ENCODE measurements at regions of chr11 and their contacts with region 1.

Region 1: DNA sequence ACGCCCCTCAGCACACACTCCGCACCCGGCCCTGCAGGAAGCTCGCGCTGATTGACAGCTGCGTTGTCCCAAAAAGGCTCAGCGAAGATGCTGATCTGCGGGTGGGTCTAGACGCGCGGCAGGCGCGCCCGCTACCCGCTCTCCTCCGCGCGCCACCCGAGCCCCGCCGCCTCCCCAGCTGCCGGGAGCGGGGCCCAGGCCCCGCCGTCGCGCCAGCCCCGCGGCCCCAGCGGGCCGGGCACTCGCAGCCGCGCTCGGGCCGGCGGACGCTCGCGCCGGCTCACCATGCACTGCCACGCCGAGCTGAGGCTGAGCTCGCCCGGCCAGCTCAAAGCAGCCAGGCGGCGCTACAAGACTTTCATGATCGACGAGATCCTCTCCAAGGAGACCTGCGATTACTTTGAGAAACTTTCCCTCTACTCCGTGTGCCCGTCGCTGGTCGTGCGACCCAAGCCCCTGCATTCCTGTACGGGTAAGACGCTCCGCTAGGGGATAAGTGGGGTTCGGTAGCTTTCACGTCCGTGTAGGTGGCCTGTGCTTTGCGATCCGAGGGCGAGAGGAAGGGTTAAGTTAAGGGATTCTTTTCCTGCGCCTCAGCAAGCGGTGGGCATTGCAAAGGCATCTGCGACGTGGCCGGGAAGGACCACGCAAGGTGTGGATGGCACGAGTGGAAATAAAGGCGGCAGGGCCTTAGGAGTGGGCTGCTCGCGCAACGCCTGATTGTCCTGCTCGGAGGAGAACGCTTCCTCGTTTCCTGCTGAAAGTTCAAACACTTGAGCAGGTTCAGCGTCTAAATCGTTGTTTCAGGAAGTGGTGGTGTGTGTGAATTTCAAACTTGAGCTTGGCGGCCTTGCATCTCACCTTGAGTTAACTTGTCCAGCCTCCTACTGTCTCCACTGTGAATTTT is at the start of gene BARX2:
- DNase-seq: peak; percentile 72
- H3K4me3 Mint-ChIP-seq: peak within 1 kb of the TSS; percentile 65
- H3K27ac Mint-ChIP-seq: no peak within 1 kb of the TSS
- H3K4me1 Mint-ChIP-seq: peaks cover 6% of the 10 kb centered on the region
- H3K27me3 Mint-ChIP-seq: peaks cover 96% of the 10 kb centered on the region
- CTCF ChIP-seq: peak; percentile 63
- total RNA-seq, gene BARX2: not detected in 2 replicates

Region 2: DNA sequence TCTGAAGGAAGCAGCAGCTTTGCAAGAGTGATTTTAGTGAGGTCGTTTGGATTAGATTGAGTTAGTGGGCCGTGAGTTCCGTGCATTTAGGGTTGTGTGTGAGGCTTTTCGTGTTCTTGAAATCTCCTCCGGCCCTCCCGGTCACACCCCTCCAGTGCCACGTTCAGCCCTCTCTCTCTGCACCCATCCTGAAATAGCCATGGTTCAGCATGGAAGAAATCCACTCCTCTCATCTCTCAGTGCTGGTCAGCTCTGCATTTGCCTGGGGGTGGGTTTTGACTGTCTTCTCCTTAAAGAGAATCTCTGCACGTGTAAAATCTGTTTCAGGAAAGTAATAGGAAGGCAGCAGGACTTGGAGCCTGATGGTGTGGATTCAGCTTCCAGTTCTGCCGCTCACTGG is 19.4 kb after region 1 on chr11:
- CTCF ChIA-PET with region 1: interaction called, 11 read pairs
- POLR2A ChIA-PET with region 1: no interaction called
- intact Hi-C with region 1: no loop called
- DNase-seq: no peak
- H3K4me3 Mint-ChIP-seq: no peak overlapping the region
- H3K27ac Mint-ChIP-seq: no peak overlapping the region
- H3K4me1 Mint-ChIP-seq: no peaks in the 10 kb centered on the region
- H3K27me3 Mint-ChIP-seq: peaks cover 5% of the 10 kb centered on the region
- CTCF ChIP-seq: no peak

Region 3: DNA sequence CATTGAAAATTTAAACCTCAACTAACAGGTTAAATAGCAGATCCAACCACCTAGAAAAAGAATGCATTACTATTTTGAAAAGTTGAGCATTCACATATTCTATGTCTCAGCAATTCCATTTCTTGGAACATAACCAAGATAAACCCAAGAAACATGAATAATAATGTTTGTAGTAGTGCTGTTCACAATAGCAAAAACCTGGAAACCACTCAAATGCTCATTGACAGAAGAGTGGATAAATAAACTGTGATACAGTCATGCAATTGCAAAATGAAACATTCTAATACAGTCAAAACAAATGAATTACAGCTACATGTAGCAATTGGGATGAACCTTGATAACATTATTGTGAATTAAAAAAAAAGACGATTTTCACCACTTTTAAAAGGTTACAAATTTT is 276.8 kb after region 1 on chr11:
- CTCF ChIA-PET with region 1: interaction called, 3 read pairs
- POLR2A ChIA-PET with region 1: no interaction called
- intact Hi-C with region 1: loop called (anchors 2 kb)
- DNase-seq: peak; percentile 95
- H3K4me3 Mint-ChIP-seq: no peak overlapping the region
- H3K27ac Mint-ChIP-seq: no peak overlapping the region
- H3K4me1 Mint-ChIP-seq: peaks cover 13% of the 10 kb centered on the region
- H3K27me3 Mint-ChIP-seq: peaks cover 45% of the 10 kb centered on the region
- CTCF ChIP-seq: no peak

Region 4: DNA sequence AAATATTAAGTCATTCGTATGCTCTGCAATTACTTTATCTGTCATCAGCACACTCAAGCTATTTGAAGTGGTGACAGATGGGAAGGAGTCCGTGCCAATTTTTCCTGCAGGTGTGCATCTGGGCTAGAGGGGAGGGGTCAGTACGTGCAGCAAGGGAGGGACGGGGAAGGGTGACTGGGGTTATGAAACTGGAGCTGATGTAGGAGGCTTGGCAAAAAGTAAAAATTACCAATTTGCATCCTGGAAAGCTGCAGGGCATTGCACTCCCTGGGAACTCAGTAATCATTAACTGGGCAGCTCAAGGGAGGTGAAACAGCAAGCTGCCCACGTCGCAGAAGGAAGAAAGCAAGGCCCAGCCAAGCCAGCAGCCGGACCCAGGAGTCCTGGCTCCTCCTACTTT is 352.6 kb after region 1 on chr11:
- CTCF ChIA-PET with region 1: interaction called, 17 read pairs
- POLR2A ChIA-PET with region 1: no interaction called
- intact Hi-C with region 1: no loop called
- DNase-seq: peak; percentile 55
- H3K4me3 Mint-ChIP-seq: no peak overlapping the region
- H3K27ac Mint-ChIP-seq: no peak overlapping the region
- H3K4me1 Mint-ChIP-seq: peaks cover 54% of the 10 kb centered on the region
- H3K27me3 Mint-ChIP-seq: peaks cover 5% of the 10 kb centered on the region
- CTCF ChIP-seq: no peak